K562 (cell line): ENCODE measurements at regions of chr1 and their contacts with region 1.

Region 1: GRCh38 chr1:59947047-59947938 is 20.7 kb upstream of the CYP2J2 start:
- DNase-seq: peak; percentile 65 to 69 (median 66)
- ATAC-seq: peak; percentile 94
- H3K4me3 ChIP-seq: no peak overlapping the region
- H3K27ac ChIP-seq: no peak overlapping the region
- H3K4me1 ChIP-seq: no peaks in the 10 kb centered on the region
- H3K27me3 ChIP-seq: no peaks in the 10 kb centered on the region
- CTCF ChIP-seq: peak; percentile 80 to 85 (median 84)
- EP300 ChIP-seq: no peak
- POLR2A ChIP-seq: no peak
- RAD21 ChIP-seq: peak; percentile 75 to 85

Region 2: GRCh38 chr1:59779949-59780348 is 167.3 kb before region 1 on chr1:
- CTCF ChIA-PET with region 1: no interaction called
- POLR2A ChIA-PET with region 1: no interaction called
- in situ Hi-C with region 1: no loop called
- intact Hi-C with region 1: loop called (anchors 5 kb)
- DNase-seq: peak in 2 of 4 experiments; percentile 15 to 31
- ATAC-seq: peak; percentile 71
- H3K4me3 ChIP-seq: no peak overlapping the region
- H3K27ac ChIP-seq: no peak overlapping the region
- H3K4me1 ChIP-seq: no peaks in the 10 kb centered on the region
- H3K27me3 ChIP-seq: no peaks in the 10 kb centered on the region
- CTCF ChIP-seq: peak in 2 of 3 experiments; percentile 25 to 38; a peak in 2 of 6 replicates
- EP300 ChIP-seq: no peak
- POLR2A ChIP-seq: no peak
- RAD21 ChIP-seq: peak in 1 of 2 experiments; percentile 30; a peak in 1 of 4 replicates

Region 3: GRCh38 chr1:59879574-59879973 is 67.7 kb before region 1 on chr1:
- CTCF ChIA-PET with region 1: no interaction called
- POLR2A ChIA-PET with region 1: no interaction called
- in situ Hi-C with region 1: no loop called
- intact Hi-C with region 1: loop called (anchors 1 kb)
- DNase-seq: peak; percentile 21 to 61 (median 30)
- ATAC-seq: peak; percentile 90
- H3K4me3 ChIP-seq: no peak overlapping the region
- H3K27ac ChIP-seq: no peak overlapping the region
- H3K4me1 ChIP-seq: no peaks in the 10 kb centered on the region
- H3K27me3 ChIP-seq: no peaks in the 10 kb centered on the region
- CTCF ChIP-seq: peak; percentile 39 to 44 (median 44); a peak in 5 of 6 replicates
- EP300 ChIP-seq: no peak
- POLR2A ChIP-seq: no peak
- RAD21 ChIP-seq: peak in 1 of 2 experiments; percentile 59; a peak in 2 of 4 replicates